ENCODE measurements at regions of chr18 and their contacts with region 1.

Region 1: DNA sequence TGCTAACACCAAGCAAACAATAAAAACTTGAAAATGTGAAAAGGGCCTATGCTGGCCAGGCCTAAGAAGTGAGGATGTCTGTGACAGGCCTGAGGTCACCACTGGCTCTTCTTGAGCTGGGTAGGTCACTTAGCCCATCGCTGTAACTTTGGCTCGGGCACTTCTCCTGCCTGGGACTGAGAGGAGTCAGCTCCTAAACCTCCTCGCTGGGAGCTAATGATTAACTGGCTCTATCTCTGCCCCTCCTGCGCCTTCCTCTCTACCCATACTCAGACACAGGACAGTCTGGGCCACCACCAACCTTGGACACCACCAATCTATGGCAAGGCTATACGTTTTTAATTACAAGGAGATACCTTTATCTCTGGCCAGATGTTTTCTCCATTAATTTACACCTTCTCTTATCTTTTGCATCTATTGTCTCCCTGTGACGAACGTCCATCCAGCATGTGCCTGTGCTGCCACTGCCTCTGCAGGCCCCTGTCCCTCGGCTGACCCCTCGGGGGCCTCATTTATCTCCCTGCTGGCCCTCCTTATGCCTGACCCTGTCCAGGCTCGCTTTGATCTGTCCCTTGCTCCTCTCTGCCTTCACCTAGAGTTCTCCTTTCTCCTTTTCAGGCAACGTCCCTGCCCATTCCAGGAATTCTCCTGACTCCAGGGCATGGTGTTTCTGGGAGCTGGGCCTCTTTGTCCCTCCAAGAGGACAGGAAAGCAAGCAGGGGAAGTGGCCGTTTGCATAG is 149.1 kb upstream of the GATA6 start:
- DNase-seq: peak; percentile 89 to 97
- H3K4me3 ChIP-seq: no peak overlapping the region
- H3K4me3 Mint-ChIP-seq: peak overlapping the region; percentile 51
- H3K27ac Mint-ChIP-seq: peak overlapping the region; percentile 59
- H3K4me1 ChIP-seq: peaks cover 66% of the 10 kb centered on the region
- H3K4me1 Mint-ChIP-seq: peaks cover 39% of the 10 kb centered on the region
- H3K27me3 ChIP-seq: no peaks in the 10 kb centered on the region
- H3K27me3 Mint-ChIP-seq: no peaks in the 10 kb centered on the region
- CTCF ChIP-seq: no peak

Region 2: GRCh38 chr18:21980744-21981143 is 39.6 kb before region 1 on chr18:
- CTCF ChIA-PET with region 1: no interaction called
- POLR2A ChIA-PET with region 1: interaction called, 5 read pairs
- intact Hi-C with region 1: loop called (anchors 5 kb)
- DNase-seq: peak; percentile 82 to 89
- H3K4me3 ChIP-seq: no peak overlapping the region
- H3K4me3 Mint-ChIP-seq: peak overlapping the region; percentile 66
- H3K27ac Mint-ChIP-seq: peak overlapping the region; percentile 86
- H3K4me1 ChIP-seq: peaks cover 45% of the 10 kb centered on the region
- H3K4me1 Mint-ChIP-seq: peaks cover 37% of the 10 kb centered on the region
- H3K27me3 ChIP-seq: no peaks in the 10 kb centered on the region
- H3K27me3 Mint-ChIP-seq: no peaks in the 10 kb centered on the region
- CTCF ChIP-seq: no peak

Region 3: GRCh38 chr18:21991081-21991581 is 29.2 kb before region 1 on chr18:
- CTCF ChIA-PET with region 1: interaction called, 7 read pairs
- POLR2A ChIA-PET with region 1: interaction called, 8 read pairs
- intact Hi-C with region 1: loop called (anchors 1 kb)
- DNase-seq: peak; percentile 91 to 96
- H3K4me3 ChIP-seq: no peak overlapping the region
- H3K4me3 Mint-ChIP-seq: peak overlapping the region; percentile 59
- H3K27ac Mint-ChIP-seq: peak overlapping the region; percentile 96
- H3K4me1 ChIP-seq: peaks cover 76% of the 10 kb centered on the region
- H3K4me1 Mint-ChIP-seq: peaks cover 31% of the 10 kb centered on the region
- H3K27me3 ChIP-seq: no peaks in the 10 kb centered on the region
- H3K27me3 Mint-ChIP-seq: no peaks in the 10 kb centered on the region
- CTCF ChIP-seq: no peak

Region 4: DNA sequence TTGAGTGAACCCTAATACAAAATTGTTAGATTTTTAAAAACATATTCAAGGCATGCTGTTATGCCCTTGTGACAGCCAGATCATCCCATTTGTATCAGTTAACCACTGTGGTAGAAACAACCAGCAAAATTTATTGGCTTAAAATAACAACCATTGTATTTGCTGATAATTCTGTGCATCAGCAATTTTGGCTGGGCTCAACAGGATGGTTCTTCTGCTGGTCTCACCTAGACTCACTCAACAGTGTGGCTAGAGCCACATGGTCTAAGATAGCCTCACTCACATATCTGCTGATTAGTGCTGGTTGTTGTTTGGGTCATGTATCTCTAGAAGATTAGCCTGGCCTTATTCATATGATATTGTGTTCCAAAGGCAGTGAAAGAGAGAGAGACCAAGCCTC is 11.1 kb before region 1 on chr18:
- CTCF ChIA-PET with region 1: no interaction called
- POLR2A ChIA-PET with region 1: no interaction called
- intact Hi-C with region 1: no loop called
- DNase-seq: no peak
- H3K4me3 ChIP-seq: no peak overlapping the region
- H3K4me3 Mint-ChIP-seq: no peak overlapping the region
- H3K27ac Mint-ChIP-seq: no peak overlapping the region
- H3K4me1 ChIP-seq: no peaks in the 10 kb centered on the region
- H3K4me1 Mint-ChIP-seq: peaks cover 13% of the 10 kb centered on the region
- H3K27me3 ChIP-seq: no peaks in the 10 kb centered on the region
- H3K27me3 Mint-ChIP-seq: no peaks in the 10 kb centered on the region
- CTCF ChIP-seq: no peak

Region 5: GRCh38 chr18:22032392-22032961 is 12.2 kb after region 1 on chr18:
- CTCF ChIA-PET with region 1: interaction called, 3 read pairs
- POLR2A ChIA-PET with region 1: interaction called, 10 read pairs
- intact Hi-C with region 1: loop called (anchors 1 kb)
- DNase-seq: peak; percentile 83 to 87
- H3K4me3 ChIP-seq: no peak overlapping the region
- H3K4me3 Mint-ChIP-seq: peak overlapping the region; percentile 57
- H3K27ac Mint-ChIP-seq: peak overlapping the region; percentile 95
- H3K4me1 ChIP-seq: peaks cover 44% of the 10 kb centered on the region
- H3K4me1 Mint-ChIP-seq: peaks cover 31% of the 10 kb centered on the region
- H3K27me3 ChIP-seq: no peaks in the 10 kb centered on the region; the same call in 1 of the 2 replicates
- H3K27me3 Mint-ChIP-seq: no peaks in the 10 kb centered on the region
- CTCF ChIP-seq: no peak

Region 6: GRCh38 chr18:22044474-22045220 is 24.4 kb after region 1 on chr18:
- CTCF ChIA-PET with region 1: interaction called, 7 read pairs
- POLR2A ChIA-PET with region 1: interaction called, 17 read pairs
- intact Hi-C with region 1: loop called (anchors 1 kb)
- DNase-seq: peak; percentile 88 to 94
- H3K4me3 ChIP-seq: peak overlapping the region; percentile 22
- H3K4me3 Mint-ChIP-seq: peak overlapping the region; percentile 71
- H3K27ac Mint-ChIP-seq: peak overlapping the region; percentile 89
- H3K4me1 ChIP-seq: peaks cover 88% of the 10 kb centered on the region
- H3K4me1 Mint-ChIP-seq: peaks cover 79% of the 10 kb centered on the region
- H3K27me3 ChIP-seq: no peaks in the 10 kb centered on the region
- H3K27me3 Mint-ChIP-seq: no peaks in the 10 kb centered on the region
- CTCF ChIP-seq: no peak

Region 7: GRCh38 chr18:22060361-22060760 is 40.1 kb after region 1 on chr18:
- CTCF ChIA-PET with region 1: interaction called, 3 read pairs
- POLR2A ChIA-PET with region 1: no interaction called
- intact Hi-C with region 1: loop called (anchors 2 kb)
- DNase-seq: no peak
- H3K4me3 ChIP-seq: no peak overlapping the region
- H3K4me3 Mint-ChIP-seq: peak overlapping the region; percentile 48
- H3K27ac Mint-ChIP-seq: peak overlapping the region; percentile 35
- H3K4me1 ChIP-seq: peaks cover 86% of the 10 kb centered on the region
- H3K4me1 Mint-ChIP-seq: peaks cover 38% of the 10 kb centered on the region
- H3K27me3 ChIP-seq: no peaks in the 10 kb centered on the region
- H3K27me3 Mint-ChIP-seq: no peaks in the 10 kb centered on the region
- CTCF ChIP-seq: no peak

Region 8: GRCh38 chr18:22084547-22084946 is 64.2 kb after region 1 on chr18:
- CTCF ChIA-PET with region 1: interaction called, 3 read pairs
- POLR2A ChIA-PET with region 1: interaction called, 4 read pairs
- intact Hi-C with region 1: loop called (anchors 1 kb)
- DNase-seq: peak; percentile 78 to 91
- H3K4me3 ChIP-seq: peak overlapping the region; percentile 3; the same call in 1 of the 2 replicates
- H3K4me3 Mint-ChIP-seq: peak overlapping the region; percentile 69
- H3K27ac Mint-ChIP-seq: peak overlapping the region; percentile 87
- H3K4me1 ChIP-seq: peaks cover 75% of the 10 kb centered on the region
- H3K4me1 Mint-ChIP-seq: peaks cover 61% of the 10 kb centered on the region
- H3K27me3 ChIP-seq: no peaks in the 10 kb centered on the region
- H3K27me3 Mint-ChIP-seq: no peaks in the 10 kb centered on the region
- CTCF ChIP-seq: no peak

Region 9: DNA sequence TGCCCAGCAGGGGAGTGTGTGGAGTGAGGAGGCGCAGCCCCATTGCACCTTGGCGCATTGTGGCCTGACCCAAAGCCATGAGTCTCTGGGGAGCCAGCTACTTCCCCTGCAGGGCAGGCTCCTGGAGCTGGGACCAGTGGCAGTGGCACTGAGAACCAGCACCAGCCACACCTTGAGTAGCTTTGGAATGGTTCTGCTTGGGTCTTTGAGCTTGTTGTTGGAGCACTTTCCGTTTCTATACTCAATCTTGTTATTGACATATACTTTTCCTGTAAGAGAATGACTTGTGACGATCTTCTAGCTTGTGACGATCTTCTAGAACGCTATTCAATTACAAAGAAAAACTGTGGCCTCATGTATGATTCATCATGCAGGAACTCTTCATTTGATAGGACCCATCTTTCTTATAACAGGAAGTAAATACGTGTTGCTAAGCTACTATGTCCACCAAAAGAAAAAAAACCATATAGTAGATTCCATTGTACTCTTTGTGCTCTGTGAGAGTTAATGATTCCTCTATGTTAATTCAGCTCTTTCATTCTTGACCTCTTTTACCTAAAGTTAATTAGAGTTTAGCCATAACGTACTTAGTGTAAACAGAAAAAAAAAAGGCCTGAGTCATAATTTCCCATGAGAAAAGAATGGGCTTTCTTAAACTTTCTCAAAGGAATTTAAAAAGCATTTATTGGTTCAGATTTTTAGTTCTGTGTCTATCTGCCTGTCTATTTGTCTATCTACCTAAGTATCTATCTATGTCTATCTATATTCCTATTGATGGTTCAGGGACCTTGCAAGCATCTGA is 262.2 kb after region 1 on chr18:
- CTCF ChIA-PET with region 1: no interaction called
- POLR2A ChIA-PET with region 1: no interaction called
- intact Hi-C with region 1: no loop called
- DNase-seq: peak in 1 of 2 experiments; percentile 30
- H3K4me3 ChIP-seq: no peak overlapping the region
- H3K4me3 Mint-ChIP-seq: peak overlapping the region; percentile 44
- H3K27ac Mint-ChIP-seq: peak overlapping the region; percentile 82
- H3K4me1 ChIP-seq: peaks cover 16% of the 10 kb centered on the region
- H3K4me1 Mint-ChIP-seq: peaks cover 20% of the 10 kb centered on the region
- H3K27me3 ChIP-seq: no peaks in the 10 kb centered on the region
- H3K27me3 Mint-ChIP-seq: no peaks in the 10 kb centered on the region
- CTCF ChIP-seq: no peak

Region 10: DNA sequence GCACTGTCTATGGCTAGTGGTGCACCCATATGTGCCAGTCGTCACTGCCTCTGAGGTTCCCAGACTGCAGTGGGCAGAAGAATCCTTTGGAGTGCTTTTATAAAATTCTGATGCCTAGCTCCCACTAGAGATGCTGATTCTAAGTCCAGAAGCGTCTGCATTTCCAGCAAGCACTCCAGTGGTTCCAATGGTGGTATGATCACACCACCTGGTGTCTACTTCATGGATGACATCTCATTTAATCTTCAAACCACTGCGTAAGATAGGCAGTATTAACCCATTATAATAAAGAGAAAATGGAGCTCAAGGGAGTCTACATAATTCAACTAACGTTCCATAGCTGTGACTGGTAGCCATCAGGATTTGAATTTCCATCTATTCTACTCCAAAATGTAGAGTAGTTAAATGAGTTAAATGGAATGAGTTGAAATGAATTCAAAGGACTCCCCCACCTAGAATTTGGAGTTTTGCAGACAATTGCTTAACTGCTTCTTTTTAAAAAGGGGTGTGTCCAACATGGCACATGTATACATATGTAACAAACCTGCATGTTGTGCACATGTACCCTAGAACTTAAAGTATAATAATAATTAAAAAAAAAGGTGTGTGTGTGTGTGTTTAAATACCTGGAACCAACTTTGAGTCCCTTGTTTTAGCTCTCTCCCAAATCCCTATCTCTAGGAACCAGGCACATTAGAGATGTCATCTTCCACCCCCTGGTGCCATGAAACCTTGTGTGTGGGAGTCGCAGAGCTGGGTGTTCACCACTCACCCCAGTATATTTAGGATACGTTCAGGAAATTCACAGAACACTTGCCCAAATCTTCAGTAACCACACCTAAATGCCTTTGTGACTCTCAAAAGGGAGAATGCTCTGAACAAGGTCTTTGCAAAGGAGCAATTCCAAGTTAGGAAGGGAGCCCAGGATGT is 1683.0 kb after region 1 on chr18:
- CTCF ChIA-PET with region 1: no interaction called
- POLR2A ChIA-PET with region 1: no interaction called
- intact Hi-C with region 1: no loop called
- DNase-seq: peak in 1 of 2 experiments; percentile 49
- H3K4me3 ChIP-seq: no peak overlapping the region
- H3K4me3 Mint-ChIP-seq: no peak overlapping the region
- H3K27ac Mint-ChIP-seq: no peak overlapping the region
- H3K4me1 ChIP-seq: no peaks in the 10 kb centered on the region
- H3K4me1 Mint-ChIP-seq: peaks cover 14% of the 10 kb centered on the region
- H3K27me3 ChIP-seq: no peaks in the 10 kb centered on the region
- H3K27me3 Mint-ChIP-seq: no peaks in the 10 kb centered on the region
- CTCF ChIP-seq: peak; percentile 27 to 32